ENCODE measurements at regions of chrX and their contacts with region 1.

Region 1: GRCh38 chrX:67436867-67437266 is 107.0 kb upstream of the AR start:
- DNase-seq: no peak
- H3K4me3 ChIP-seq: no peak overlapping the region
- H3K4me3 Mint-ChIP-seq: no peak overlapping the region
- H3K27ac ChIP-seq: no peak overlapping the region
- H3K27ac Mint-ChIP-seq: no peak overlapping the region
- H3K4me1 ChIP-seq: no peaks in the 10 kb centered on the region
- H3K4me1 Mint-ChIP-seq: no peaks in the 10 kb centered on the region
- H3K27me3 ChIP-seq: no peaks in the 10 kb centered on the region
- H3K27me3 Mint-ChIP-seq: no peaks in the 10 kb centered on the region

Region 2: DNA sequence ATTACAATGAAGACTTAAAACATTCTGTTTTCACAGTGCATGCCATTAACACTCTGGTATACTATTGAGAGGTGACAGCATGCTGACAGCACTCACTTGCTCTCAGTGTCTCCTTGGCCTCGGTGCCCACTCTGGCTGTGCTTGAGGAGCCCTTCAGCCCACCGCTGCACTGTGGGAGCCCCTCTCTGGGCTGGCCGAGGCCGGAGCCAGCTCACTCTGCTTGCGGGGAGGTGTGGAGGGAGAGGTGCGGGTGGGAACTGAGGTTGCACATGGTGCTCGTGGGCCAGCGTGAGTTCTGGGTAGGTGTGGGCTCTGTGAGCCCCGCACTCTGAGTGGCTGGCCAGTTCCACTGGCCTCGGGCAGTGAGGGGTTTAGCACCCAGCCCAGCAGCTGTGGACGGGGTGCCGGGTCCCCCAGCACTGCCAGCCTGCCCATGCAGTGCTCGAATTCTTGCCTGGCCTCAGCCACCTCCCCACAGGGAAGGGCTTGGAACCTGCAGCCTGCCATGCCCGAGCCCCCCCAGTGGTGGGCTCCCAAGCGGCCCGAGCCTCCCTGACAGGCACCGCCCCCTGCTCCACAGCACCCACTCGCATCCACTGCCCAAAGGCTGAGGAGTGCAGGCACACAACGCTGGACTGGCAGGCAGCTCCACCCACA is 28.3 kb before region 1 on chrX:
- CTCF ChIA-PET with region 1: no interaction called
- POLR2A ChIA-PET with region 1: no interaction called
- intact Hi-C with region 1: loop called (anchors 1 kb)
- DNase-seq: no peak
- H3K4me3 ChIP-seq: no peak overlapping the region
- H3K4me3 Mint-ChIP-seq: no peak overlapping the region
- H3K27ac ChIP-seq: no peak overlapping the region
- H3K27ac Mint-ChIP-seq: no peak overlapping the region
- H3K4me1 ChIP-seq: no peaks in the 10 kb centered on the region
- H3K4me1 Mint-ChIP-seq: no peaks in the 10 kb centered on the region
- H3K27me3 ChIP-seq: no peaks in the 10 kb centered on the region
- H3K27me3 Mint-ChIP-seq: no peaks in the 10 kb centered on the region

Measured in CD4-positive, alpha-beta memory T cell (primary cell).